ENCODE measurements at regions of chr3 and their contacts with region 1.

Region 1: GRCh38 chr3:196867507-196868296 is at the start of gene SENP5:
- DNase-seq: peak; percentile 93 to 96
- ATAC-seq: peak; percentile 99 to 100 (median 99)
- H3K4me3 ChIP-seq: peak within 1 kb of the TSS; percentile 91
- H3K27ac ChIP-seq: peak within 1 kb of the TSS; percentile 96
- H3K4me1 ChIP-seq: peaks cover 24% of the 10 kb centered on the region
- H3K27me3 ChIP-seq: no peaks in the 10 kb centered on the region
- CTCF ChIP-seq: no peak
- total RNA-seq, gene SENP5: 15.5 to 30.6 (median 24.9) TPM

Region 2: GRCh38 chr3:196942226-196942914 is 74.7 kb after region 1 on chr3 and contains the start of gene NCBP2:
- intact Hi-C with region 1: loop called (anchors 2 to 5 kb)
- DNase-seq: peak; percentile 99 to 100
- ATAC-seq: peak; percentile 96 to 98 (median 96)
- H3K4me3 ChIP-seq: peak within 1 kb of the TSS; percentile 95
- H3K27ac ChIP-seq: peak within 1 kb of the TSS; percentile 96
- H3K4me1 ChIP-seq: peaks cover 19% of the 10 kb centered on the region
- H3K27me3 ChIP-seq: no peaks in the 10 kb centered on the region
- CTCF ChIP-seq: peak; percentile 60
- total RNA-seq, gene NCBP2: 37.0 to 53.2 (median 48.7) TPM

Region 3: DNA sequence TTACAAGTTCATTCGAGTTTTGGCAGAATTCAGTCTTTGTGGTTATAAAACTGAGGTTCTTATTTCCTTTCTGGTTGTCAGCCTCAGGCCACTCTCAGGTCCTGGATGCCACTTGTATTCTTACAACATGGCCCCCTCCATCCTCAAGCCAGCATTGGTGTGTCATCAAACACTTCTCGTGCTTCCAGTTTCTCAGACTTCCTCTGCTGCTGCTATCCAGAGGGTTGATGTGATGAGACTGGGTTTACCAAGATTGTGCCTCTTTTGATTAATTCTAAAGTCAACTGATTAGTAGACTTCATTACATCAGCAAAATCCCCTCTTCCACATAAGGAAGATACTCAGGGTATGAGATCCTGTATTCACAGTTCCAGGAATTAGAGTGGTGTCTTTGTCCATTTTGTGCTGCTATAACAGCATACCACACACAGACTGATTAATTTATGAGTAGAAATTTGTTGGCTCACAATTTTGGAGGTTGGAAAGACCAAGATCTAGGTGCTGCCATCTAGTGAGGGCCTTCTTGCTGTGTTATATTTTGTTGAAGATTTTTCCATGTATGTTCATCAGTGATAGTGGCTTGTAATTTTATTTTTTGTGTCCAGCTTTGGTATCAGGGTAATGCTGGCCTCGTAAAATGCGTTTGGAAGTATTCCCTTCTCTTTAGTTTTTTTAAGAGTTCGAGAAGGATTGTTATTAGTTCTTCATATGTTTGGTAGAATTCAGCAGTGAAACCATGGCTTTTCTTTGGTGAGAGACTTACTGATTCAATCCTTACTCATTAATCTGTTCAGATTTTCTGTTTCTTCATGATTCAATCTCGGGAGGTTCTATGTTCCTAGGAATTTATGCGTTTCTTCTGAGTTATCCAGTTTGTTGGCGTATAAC is 934.4 kb after region 1 on chr3:
- intact Hi-C with region 1: no loop called
- DNase-seq: no peak
- ATAC-seq: peak in 2 of 4 donors; percentile 52 to 54
- H3K4me3 ChIP-seq: no peak overlapping the region
- H3K27ac ChIP-seq: no peak overlapping the region
- H3K4me1 ChIP-seq: peaks cover 23% of the 10 kb centered on the region
- H3K27me3 ChIP-seq: no peaks in the 10 kb centered on the region
- CTCF ChIP-seq: peak; percentile 22

Measured in psoas muscle (tissue), 8 donors.